ENCODE measurements at regions of chr1 and their contacts with region 1.

Region 1: GRCh38 chr1:246579818-246580217 is 13.6 kb downstream of the CNST start:
- DNase-seq: peak; percentile 31
- ATAC-seq: peak; percentile 60
- H3K4me3 ChIP-seq: no peak overlapping the region
- H3K4me3 Mint-ChIP-seq: peak overlapping the region; percentile 2
- H3K27ac ChIP-seq: peak overlapping the region in 1 of 2 donors; percentile 71
- H3K27ac Mint-ChIP-seq: peak overlapping the region; percentile 8
- H3K4me1 ChIP-seq: peaks cover 34 to 40% of the 10 kb centered on the region in 2 donors
- H3K4me1 Mint-ChIP-seq: peaks cover 54% of the 10 kb centered on the region
- H3K27me3 ChIP-seq: no peaks in the 10 kb centered on the region
- H3K27me3 Mint-ChIP-seq: no peaks in the 10 kb centered on the region
- CTCF ChIP-seq: no peak

Region 2: GRCh38 chr1:246651012-246651695 is 71.3 kb after region 1 on chr1:
- CTCF ChIA-PET with region 1: no interaction called
- POLR2A ChIA-PET with region 1: no interaction called
- intact Hi-C with region 1: loop called (anchors 10 kb)
- DNase-seq: no peak
- ATAC-seq: no peak
- H3K4me3 ChIP-seq: no peak overlapping the region
- H3K4me3 Mint-ChIP-seq: peak overlapping the region; percentile 63
- H3K27ac ChIP-seq: peak overlapping the region in 1 of 2 donors; percentile 23
- H3K27ac Mint-ChIP-seq: peak overlapping the region; percentile 54
- H3K4me1 ChIP-seq: peaks cover 5 to 9% of the 10 kb centered on the region in 2 donors
- H3K4me1 Mint-ChIP-seq: peaks cover 22% of the 10 kb centered on the region
- H3K27me3 ChIP-seq: no peaks in the 10 kb centered on the region
- H3K27me3 Mint-ChIP-seq: no peaks in the 10 kb centered on the region
- CTCF ChIP-seq: no peak

Measured in B cell (primary cell).